HepG2 (cell line): ENCODE measurements at regions of chr7 and their contacts with region 1.

Region 1: GRCh38 chr7:48109848-48110663 is 21.0 kb downstream of the UPP1 start:
- DNase-seq: peak; percentile 56
- ATAC-seq: peak; percentile 86
- H3K4me3 ChIP-seq: no peak overlapping the region
- H3K27ac ChIP-seq: no peak overlapping the region
- H3K4me1 ChIP-seq: peaks cover 20% of the 10 kb centered on the region
- H3K27me3 ChIP-seq: no peaks in the 10 kb centered on the region
- CTCF ChIP-seq: peak; percentile 97
- EP300 ChIP-seq: no peak
- POLR2A ChIP-seq: no peak
- RAD21 ChIP-seq: peak; percentile 93

Region 2: GRCh38 chr7:47254081-47255006 is 855.7 kb before region 1 on chr7:
- CTCF ChIA-PET with region 1: no interaction called
- POLR2A ChIA-PET with region 1: no interaction called
- in situ Hi-C with region 1: loop called (anchors 25 kb)
- intact Hi-C with region 1: no loop called
- DNase-seq: peak; percentile 20
- ATAC-seq: peak; percentile 95
- H3K4me3 ChIP-seq: peak overlapping the region; percentile 51 to 73 (median 58)
- H3K27ac ChIP-seq: no peak overlapping the region
- H3K4me1 ChIP-seq: peaks cover 15% of the 10 kb centered on the region; the same call in 1 of the 2 replicates
- H3K27me3 ChIP-seq: peaks cover 0 to 30% of the 10 kb centered on the region in 2 experiments
- CTCF ChIP-seq: peak; percentile 74
- EP300 ChIP-seq: no peak
- POLR2A ChIP-seq: no peak
- RAD21 ChIP-seq: peak; percentile 77

Region 3: DNA sequence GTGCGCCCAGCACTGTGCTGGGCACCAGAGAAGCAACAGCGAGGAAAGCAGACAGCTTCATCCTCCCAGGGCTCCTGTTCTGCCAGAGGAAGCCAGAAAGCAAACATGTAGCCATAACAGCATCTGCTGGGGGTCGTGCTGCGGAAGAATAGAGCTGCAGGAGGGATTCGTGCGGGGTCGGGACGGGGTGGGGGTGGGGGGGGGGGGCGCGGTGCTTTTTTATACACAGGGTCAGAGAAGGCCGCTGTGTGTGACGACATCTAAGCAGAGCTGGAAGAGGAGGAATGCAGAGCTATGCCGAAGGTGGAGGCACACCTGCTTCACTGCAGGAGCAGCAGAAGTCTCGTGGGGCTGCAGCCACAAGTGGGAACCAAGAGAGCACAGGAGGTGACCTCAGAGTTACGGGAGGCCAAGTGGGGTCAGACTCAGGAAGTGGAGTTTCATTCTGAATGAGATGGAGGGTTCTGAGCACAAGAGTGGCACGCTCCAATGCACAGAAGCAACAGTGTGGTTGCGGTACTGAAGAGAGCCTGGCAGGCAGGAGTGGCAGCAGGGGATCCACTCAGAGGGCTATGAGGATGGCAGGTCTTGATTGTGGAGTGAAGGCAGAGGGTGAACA is 172.9 kb before region 1 on chr7:
- CTCF ChIA-PET with region 1: no interaction called
- POLR2A ChIA-PET with region 1: no interaction called
- in situ Hi-C with region 1: loop called (anchors 5 kb)
- intact Hi-C with region 1: no loop called
- DNase-seq: no peak
- ATAC-seq: no peak
- H3K4me3 ChIP-seq: no peak overlapping the region
- H3K27ac ChIP-seq: no peak overlapping the region
- H3K4me1 ChIP-seq: peaks cover 9% of the 10 kb centered on the region
- H3K27me3 ChIP-seq: peaks cover 0 to 3% of the 10 kb centered on the region in 2 experiments; a peak in 2 of 5 replicates
- CTCF ChIP-seq: no peak
- EP300 ChIP-seq: no peak
- POLR2A ChIP-seq: no peak
- RAD21 ChIP-seq: no peak

Region 4: DNA sequence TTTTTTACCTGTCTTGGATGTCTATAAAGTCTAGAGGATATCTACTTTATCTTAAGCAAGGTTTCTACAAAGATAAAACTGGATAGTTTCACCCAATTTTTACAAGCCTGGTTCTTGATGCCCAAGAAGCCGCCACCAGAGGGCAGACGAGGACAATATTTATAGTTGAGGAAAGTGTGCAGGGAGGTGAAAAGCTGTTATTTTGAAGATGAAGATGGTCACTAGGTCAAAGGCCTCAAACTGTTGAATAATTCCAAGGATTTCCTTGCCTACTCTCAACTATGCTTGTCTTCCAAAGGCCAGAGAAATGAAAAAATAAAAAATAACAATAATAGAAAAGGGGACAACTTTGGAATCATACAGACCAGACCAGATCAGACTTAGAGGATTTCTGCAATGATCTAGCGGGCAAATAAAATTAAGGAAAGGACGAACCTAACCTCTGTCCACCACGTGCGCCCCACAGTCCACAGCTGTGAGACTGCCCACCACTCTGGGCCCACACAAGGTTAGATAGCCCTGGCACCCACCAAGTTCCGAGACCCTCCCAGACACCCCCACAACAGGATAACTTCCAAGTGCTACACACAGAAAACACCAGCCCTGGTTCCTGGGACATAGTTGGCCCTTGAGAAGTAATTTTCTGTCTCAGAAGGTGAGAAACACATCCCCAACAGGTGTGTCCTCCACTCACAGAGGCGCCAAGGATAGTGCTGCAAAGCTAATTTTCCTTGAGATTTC is 164.6 kb before region 1 on chr7:
- CTCF ChIA-PET with region 1: interaction called, 20 read pairs
- POLR2A ChIA-PET with region 1: interaction called, 5 read pairs
- in situ Hi-C with region 1: no loop called
- intact Hi-C with region 1: loop called (anchors 1 kb)
- DNase-seq: peak; percentile 57
- ATAC-seq: peak; percentile 61; the same call in 2 of the 3 replicates
- H3K4me3 ChIP-seq: no peak overlapping the region
- H3K27ac ChIP-seq: no peak overlapping the region
- H3K4me1 ChIP-seq: peaks cover 29% of the 10 kb centered on the region
- H3K27me3 ChIP-seq: peaks cover 2 to 7% of the 10 kb centered on the region in 2 experiments; a peak in 2 of 5 replicates
- CTCF ChIP-seq: peak; percentile 79
- EP300 ChIP-seq: no peak
- POLR2A ChIP-seq: no peak
- RAD21 ChIP-seq: peak; percentile 60; the same call in 1 of the 2 replicates

Region 5: DNA sequence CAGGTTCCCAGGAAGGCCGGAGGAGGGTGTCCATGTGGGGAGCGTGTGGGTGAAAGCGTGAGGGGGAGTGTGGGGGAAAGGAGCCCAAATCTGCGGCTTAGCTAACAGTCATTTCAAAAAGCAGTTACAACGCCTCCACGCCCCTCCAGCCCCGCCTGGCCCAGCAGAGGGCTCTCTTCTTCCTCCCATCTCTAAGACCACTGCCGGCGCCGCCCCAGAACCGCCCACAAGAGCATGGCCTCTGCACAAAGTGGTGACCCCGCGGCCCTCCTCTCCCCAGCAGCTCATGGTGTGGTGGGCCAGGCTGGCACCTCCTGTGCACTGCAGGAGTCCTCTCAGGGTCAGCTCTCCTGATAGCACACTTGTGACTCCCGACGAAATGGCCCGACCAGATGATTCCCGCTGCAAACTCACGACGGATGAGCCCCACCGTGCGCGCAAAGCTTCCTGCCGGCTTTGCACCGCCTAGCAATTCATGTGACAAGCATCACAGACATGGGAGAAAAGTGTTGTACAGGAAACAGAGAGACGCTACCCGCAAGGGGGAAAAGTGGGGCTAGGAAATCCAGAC is 118.2 kb before region 1 on chr7:
- CTCF ChIA-PET with region 1: interaction called, 24 read pairs
- POLR2A ChIA-PET with region 1: no interaction called
- in situ Hi-C with region 1: loop called (anchors 5 kb)
- intact Hi-C with region 1: loop called (anchors 1 kb)
- DNase-seq: peak; percentile 63
- ATAC-seq: peak; percentile 99
- H3K4me3 ChIP-seq: peak overlapping the region; percentile 41 to 72 (median 42)
- H3K27ac ChIP-seq: no peak overlapping the region
- H3K4me1 ChIP-seq: peaks cover 40% of the 10 kb centered on the region
- H3K27me3 ChIP-seq: no peaks in the 10 kb centered on the region
- CTCF ChIP-seq: peak; percentile 88
- EP300 ChIP-seq: no peak
- POLR2A ChIP-seq: no peak
- RAD21 ChIP-seq: peak; percentile 79